ENCODE measurements at regions of chr3 and their contacts with region 1.

Region 1: DNA sequence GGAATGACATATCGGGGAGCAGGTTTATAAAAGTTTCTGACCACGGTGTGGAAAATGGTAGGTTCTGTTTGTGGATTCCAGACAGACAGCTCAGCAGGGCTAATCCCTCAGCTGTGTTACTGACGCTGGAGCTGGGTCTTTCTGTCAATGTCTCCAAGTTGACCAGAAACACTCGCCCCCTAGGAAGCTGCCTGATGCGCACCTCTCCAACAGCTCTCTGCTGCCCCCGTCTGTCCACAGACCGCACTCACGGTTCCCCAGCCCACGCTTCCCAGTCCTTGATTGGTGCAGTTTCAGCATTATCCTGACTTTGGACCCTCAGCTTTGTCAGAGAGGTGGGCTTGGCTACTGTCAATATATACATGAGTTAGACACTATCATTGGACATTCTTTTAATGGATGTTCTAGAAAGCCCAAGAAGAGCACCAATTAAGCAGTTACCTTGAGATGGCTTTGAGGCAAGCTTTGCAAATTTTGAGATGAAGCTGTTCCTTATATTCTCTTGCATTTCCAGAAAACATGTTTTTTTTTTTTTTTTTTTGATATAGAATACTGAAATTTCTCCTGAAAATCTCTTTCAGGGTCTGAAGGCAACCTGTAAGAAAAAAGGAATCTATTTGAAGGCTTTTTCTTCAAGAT is 98.9 kb upstream of the TBC1D5 start:
- DNase-seq: peak; percentile 38 to 44
- ATAC-seq: peak; percentile 62 to 78
- H3K4me3 ChIP-seq: no peak overlapping the region
- H3K27ac ChIP-seq: no peak overlapping the region
- H3K4me1 ChIP-seq: peaks cover 0 to 6% of the 10 kb centered on the region in 2 donors
- H3K27me3 ChIP-seq: peaks cover 0 to 10% (median 0%) of the 10 kb centered on the region in 3 donors
- CTCF ChIP-seq: peak; percentile 79 to 95 (median 84)
- POLR2A ChIP-seq: no peak

Region 2: GRCh38 chr3:17258823-17259436 is 582.4 kb before region 1 on chr3:
- in situ Hi-C with region 1: loop called (anchors 25 kb)
- intact Hi-C with region 1: loop called (anchors 2 kb)
- DNase-seq: no peak
- ATAC-seq: no peak
- H3K4me3 ChIP-seq: no peak overlapping the region
- H3K27ac ChIP-seq: no peak overlapping the region
- H3K4me1 ChIP-seq: no peaks in the 10 kb centered on the region
- H3K27me3 ChIP-seq: no peaks in the 10 kb centered on the region
- CTCF ChIP-seq: peak; percentile 54 to 73 (median 60)
- POLR2A ChIP-seq: no peak

Region 3: DNA sequence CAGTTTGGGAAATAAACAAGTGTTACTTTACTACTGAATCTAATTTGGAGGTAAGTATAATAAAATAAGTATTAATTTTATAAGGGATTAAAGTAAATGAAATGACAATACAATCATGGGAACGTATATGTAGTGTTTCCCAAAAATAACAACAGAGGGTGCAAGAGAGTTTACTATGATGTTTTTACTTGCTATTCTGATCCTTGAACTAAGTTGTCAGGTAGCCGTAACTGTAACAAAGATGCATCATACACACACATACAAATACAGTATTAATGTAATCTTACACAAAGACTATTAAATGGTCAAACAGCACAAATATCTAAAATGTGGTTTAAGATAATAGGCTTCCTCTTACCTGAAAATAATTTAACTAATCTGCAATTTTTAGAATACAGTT is 410.3 kb before region 1 on chr3:
- in situ Hi-C with region 1: loop called (anchors 5 to 10 kb)
- intact Hi-C with region 1: loop called (anchors 1 kb)
- DNase-seq: no peak
- ATAC-seq: peak; percentile 66 to 77
- H3K4me3 ChIP-seq: no peak overlapping the region
- H3K27ac ChIP-seq: no peak overlapping the region
- H3K4me1 ChIP-seq: peaks cover 8 to 10% of the 10 kb centered on the region in 2 donors
- H3K27me3 ChIP-seq: no peaks in the 10 kb centered on the region
- CTCF ChIP-seq: peak; percentile 20 to 52 (median 44)
- POLR2A ChIP-seq: no peak

Region 4: GRCh38 chr3:17500618-17501017 is 340.7 kb before region 1 on chr3:
- in situ Hi-C with region 1: no loop called
- intact Hi-C with region 1: no loop called
- DNase-seq: no peak
- ATAC-seq: no peak
- H3K4me3 ChIP-seq: no peak overlapping the region
- H3K27ac ChIP-seq: no peak overlapping the region
- H3K4me1 ChIP-seq: no peaks in the 10 kb centered on the region
- H3K27me3 ChIP-seq: no peaks in the 10 kb centered on the region
- CTCF ChIP-seq: no peak
- POLR2A ChIP-seq: no peak

Region 5: DNA sequence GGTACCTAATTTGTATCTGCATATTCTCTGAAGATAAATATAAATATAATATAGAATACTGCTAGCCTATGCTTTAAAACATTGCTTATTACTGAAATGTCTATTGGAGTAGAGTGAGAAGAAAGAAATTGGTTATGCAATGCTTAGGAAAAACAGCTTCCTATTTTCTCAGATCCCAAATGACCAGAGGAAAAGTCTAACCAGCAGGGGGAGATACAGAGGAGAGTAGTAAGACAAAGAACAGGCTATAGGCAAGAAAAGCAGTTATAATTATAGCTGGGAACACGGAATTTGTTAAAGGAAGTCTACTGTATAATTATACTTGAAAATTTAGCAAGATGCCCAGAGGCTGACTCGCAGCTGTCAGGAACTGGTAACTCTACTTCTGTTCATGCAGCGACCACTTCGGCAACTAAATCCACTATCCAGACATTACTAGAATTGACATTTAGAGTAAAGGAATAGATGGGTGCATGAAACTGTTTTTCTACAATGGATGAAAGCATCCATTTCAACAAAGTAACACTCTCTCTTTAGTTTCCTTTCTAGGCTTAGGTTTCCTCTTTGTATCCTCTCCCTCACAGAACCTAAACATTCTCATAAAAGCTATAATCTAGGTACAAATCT is 196.1 kb before region 1 on chr3:
- in situ Hi-C with region 1: loop called in 1 of 4 experiments (anchors 25 kb)
- intact Hi-C with region 1: loop called (anchors 2 kb)
- DNase-seq: no peak
- ATAC-seq: peak; percentile 53 to 58
- H3K4me3 ChIP-seq: no peak overlapping the region
- H3K27ac ChIP-seq: no peak overlapping the region
- H3K4me1 ChIP-seq: peaks cover 5 to 7% of the 10 kb centered on the region in 2 donors
- H3K27me3 ChIP-seq: no peaks in the 10 kb centered on the region
- CTCF ChIP-seq: peak; percentile 35 to 69 (median 53)
- POLR2A ChIP-seq: no peak

Region 6: GRCh38 chr3:17672506-17672905 is 168.8 kb before region 1 on chr3:
- in situ Hi-C with region 1: loop called in 1 of 4 experiments (anchors 25 kb)
- intact Hi-C with region 1: no loop called
- DNase-seq: no peak
- ATAC-seq: no peak
- H3K4me3 ChIP-seq: no peak overlapping the region
- H3K27ac ChIP-seq: no peak overlapping the region
- H3K4me1 ChIP-seq: peaks cover 9 to 18% of the 10 kb centered on the region in 2 donors
- H3K27me3 ChIP-seq: no peaks in the 10 kb centered on the region
- CTCF ChIP-seq: no peak
- POLR2A ChIP-seq: no peak